ENCODE measurements at regions of chr16 and their contacts with region 1.

Region 1: DNA sequence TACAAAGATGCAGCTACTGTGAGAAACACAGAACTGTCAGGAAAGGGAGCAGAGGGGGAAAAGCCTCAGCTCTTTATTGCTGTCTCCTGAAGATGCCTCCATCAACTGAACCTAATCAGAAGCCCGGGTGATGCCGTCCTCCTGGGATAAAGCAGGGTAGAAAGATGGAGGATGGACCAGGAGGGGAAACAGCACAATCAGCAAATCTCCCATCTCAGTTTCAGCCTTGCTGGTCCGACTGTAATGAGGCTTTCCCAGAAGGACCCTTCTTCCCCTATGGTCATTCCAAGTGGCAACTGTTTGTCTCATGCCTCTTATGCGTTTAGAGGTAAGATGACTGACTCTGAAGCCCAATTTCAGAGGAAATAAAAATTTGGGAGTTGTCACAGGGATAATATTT is 24.3 kb downstream of the ZFP1 start:
- DNase-seq: no peak
- ATAC-seq: no peak
- H3K4me3 ChIP-seq: no peak overlapping the region
- H3K27ac ChIP-seq: no peak overlapping the region
- H3K4me1 ChIP-seq: no peaks in the 10 kb centered on the region
- H3K27me3 ChIP-seq: no peaks in the 10 kb centered on the region
- CTCF ChIP-seq: no peak
- POLR2A ChIP-seq: no peak

Region 2: DNA sequence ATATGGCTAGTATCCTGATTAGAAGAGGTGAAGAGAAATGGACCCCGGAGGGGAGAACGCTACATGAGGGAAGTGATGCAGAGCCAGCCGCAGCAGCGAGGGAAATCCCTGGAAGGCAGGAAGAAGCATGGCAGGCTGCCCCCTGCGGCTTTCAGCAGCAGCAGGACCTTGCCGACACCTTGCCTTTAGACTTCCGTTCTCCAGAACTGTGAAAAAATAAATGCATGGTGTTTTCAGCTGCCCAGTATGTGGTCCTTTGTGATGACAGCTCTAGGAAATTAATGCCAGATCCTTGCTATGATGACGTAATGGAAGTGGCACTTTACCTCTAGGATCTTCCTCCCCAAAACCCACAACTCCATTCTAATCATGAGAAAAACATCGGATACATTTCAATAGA is 33.9 kb before region 1 on chr16:
- in situ Hi-C with region 1: no loop called
- intact Hi-C with region 1: loop called (anchors 1 kb)
- DNase-seq: no peak
- ATAC-seq: no peak
- H3K4me3 ChIP-seq: no peak overlapping the region
- H3K27ac ChIP-seq: no peak overlapping the region
- H3K4me1 ChIP-seq: no peaks in the 10 kb centered on the region
- H3K27me3 ChIP-seq: no peaks in the 10 kb centered on the region
- CTCF ChIP-seq: no peak
- POLR2A ChIP-seq: no peak

Region 3: DNA sequence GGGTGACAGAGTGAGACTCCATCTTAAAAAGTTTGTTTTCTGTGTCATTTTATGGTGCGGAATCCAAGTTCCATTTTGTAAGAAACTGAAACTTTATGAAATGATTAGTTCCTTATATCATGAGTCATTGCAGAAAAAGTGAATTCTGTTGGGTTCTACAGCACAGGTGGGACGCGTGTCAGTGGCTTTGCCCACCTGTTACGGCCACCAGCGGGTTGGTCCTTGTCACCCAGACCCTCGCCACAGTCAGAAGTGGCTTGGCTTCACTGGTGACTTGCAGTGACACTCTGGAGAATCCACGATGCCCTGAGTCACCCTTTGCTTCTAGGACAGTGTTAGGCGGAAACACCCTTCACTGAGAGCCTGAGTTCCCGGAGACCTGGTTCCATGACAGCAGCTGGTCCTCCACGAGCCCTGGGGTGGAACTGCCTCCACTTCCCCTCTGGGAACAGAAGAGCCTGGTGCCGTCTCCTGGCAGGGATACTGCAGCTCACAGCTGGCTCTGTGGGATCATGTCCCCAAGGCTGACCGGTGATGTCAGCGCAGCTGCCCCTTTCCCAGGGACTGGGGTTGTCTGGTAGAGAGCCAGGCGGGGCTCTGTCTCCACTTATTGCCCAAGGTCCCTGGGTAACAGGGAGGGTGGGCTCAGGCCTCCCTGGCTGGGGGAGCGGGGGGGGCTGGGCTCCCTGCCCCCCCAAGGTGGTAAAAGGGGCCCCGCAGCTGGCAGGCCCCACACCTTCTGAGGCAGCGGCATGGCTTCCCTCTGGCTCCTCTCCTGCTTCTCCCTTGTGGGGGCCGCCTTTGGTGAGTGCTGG is 45.9 kb after region 1 on chr16 and contains the start of gene CTRB1:
- in situ Hi-C with region 1: no loop called
- intact Hi-C with region 1: no loop called
- DNase-seq: no peak
- ATAC-seq: no peak
- H3K4me3 ChIP-seq: no peak within 1 kb of the TSS
- H3K27ac ChIP-seq: peak within 1 kb of the TSS in 1 of 4 donors; percentile 67
- H3K4me1 ChIP-seq: no peaks in the 10 kb centered on the region
- H3K27me3 ChIP-seq: no peaks in the 10 kb centered on the region
- CTCF ChIP-seq: no peak
- POLR2A ChIP-seq: no peak
- total RNA-seq, gene CTRB1: not detected

Measured in gastrocnemius medialis (tissue), 4 donors.